WTC11 (cell line): ENCODE measurements at regions of chr15 and their contacts with region 1.

Region 1: GRCh38 chr15:71125831-71126453 is 10.7 kb downstream of the THSD4 start:
- DNase-seq: peak; percentile 59
- ATAC-seq: peak; percentile 93
- H3K4me3 Mint-ChIP-seq: no peak overlapping the region
- H3K27ac Mint-ChIP-seq: no peak overlapping the region
- H3K4me1 Mint-ChIP-seq: peaks cover 22% of the 10 kb centered on the region
- H3K27me3 Mint-ChIP-seq: peaks cover 3% of the 10 kb centered on the region; the same call in 1 of the 2 replicates
- CTCF ChIP-seq: peak; percentile 21; the same call in 1 of the 2 replicates

Region 2: DNA sequence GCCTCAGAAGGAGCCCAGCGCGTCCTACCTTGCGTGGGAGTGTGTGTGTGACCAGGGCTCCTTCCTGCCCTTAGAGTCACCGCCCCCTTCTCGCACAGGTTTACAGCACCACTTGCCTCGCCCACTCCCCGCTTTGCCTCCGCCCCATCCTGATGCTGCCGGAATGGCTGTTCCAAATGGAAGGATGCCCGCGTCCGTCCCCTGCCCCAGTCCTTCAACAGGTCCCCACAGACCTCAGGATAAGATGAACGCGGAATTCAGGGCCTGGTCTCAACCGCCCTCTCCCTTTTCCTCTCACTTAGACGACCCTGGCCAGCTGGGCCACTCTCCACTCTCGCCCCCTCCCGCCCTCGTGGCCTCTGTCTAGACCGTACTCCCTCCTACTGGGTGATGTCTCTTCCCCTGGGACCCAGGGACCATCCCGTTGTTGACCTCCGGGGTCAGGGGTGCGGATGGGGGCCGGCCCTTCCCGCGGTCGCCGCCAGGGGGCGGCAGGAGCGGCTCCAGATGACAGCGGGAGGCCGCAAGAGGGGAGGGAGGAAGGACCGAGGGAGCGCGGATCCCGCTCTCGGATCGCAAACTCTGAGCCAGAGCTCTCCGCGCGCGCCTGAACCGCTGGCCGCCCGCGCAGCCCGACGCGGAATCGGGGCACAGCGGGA is 10.9 kb before region 1 on chr15 and contains the start of gene THSD4:
- CTCF ChIA-PET with region 1: interaction called, 17 read pairs
- POLR2A ChIA-PET with region 1: no interaction called
- DNase-seq: peak; percentile 91
- ATAC-seq: peak; percentile 76
- H3K4me3 Mint-ChIP-seq: peak within 1 kb of the TSS; percentile 86
- H3K27ac Mint-ChIP-seq: peak within 1 kb of the TSS; percentile 84; the same call in 1 of the 2 replicates
- H3K4me1 Mint-ChIP-seq: peaks cover 61% of the 10 kb centered on the region
- H3K27me3 Mint-ChIP-seq: peaks cover 34% of the 10 kb centered on the region
- CTCF ChIP-seq: peak; percentile 96
- total RNA-seq, gene THSD4: 7.8 to 11.7 TPM (median 8.2 TPM) in 3 replicates

Region 3: GRCh38 chr15:71707230-71708050 is 581.5 kb after region 1 on chr15:
- CTCF ChIA-PET with region 1: no interaction called
- POLR2A ChIA-PET with region 1: no interaction called
- DNase-seq: no peak
- ATAC-seq: no peak
- H3K4me3 Mint-ChIP-seq: no peak overlapping the region
- H3K27ac Mint-ChIP-seq: no peak overlapping the region
- H3K4me1 Mint-ChIP-seq: peaks cover 6% of the 10 kb centered on the region
- H3K27me3 Mint-ChIP-seq: no peaks in the 10 kb centered on the region; the same call in 1 of the 2 replicates
- CTCF ChIP-seq: no peak